ENCODE measurements at regions of chr7 and their contacts with region 1.

Region 1: GRCh38 chr7:44986218-44987053 is 7.6 kb upstream of the MYO1G start:
- DNase-seq: peak; percentile 87
- ATAC-seq: peak; percentile 92
- H3K4me3 ChIP-seq: peak overlapping the region; percentile 88 to 100
- H3K27ac ChIP-seq: peak overlapping the region; percentile 75
- H3K4me1 ChIP-seq: peaks cover 4 to 34% of the 10 kb centered on the region in 2 experiments; a peak in 3 of 4 replicates
- H3K27me3 ChIP-seq: no peaks in the 10 kb centered on the region
- CTCF ChIP-seq: no peak
- POLR2A ChIP-seq: peak; percentile 97
- RAD21 ChIP-seq: no peak

Region 2: GRCh38 chr7:44650772-44651171 is 335.7 kb before region 1 on chr7:
- CTCF ChIA-PET with region 1: no interaction called
- POLR2A ChIA-PET with region 1: no interaction called
- RAD21 ChIA-PET with region 1: no interaction called
- intact Hi-C with region 1: no loop called
- DNase-seq: no peak
- ATAC-seq: no peak
- H3K4me3 ChIP-seq: no peak overlapping the region
- H3K27ac ChIP-seq: no peak overlapping the region
- H3K4me1 ChIP-seq: peaks cover 0 to 4% of the 10 kb centered on the region in 2 experiments; a peak in 1 of 4 replicates
- H3K27me3 ChIP-seq: no peaks in the 10 kb centered on the region
- CTCF ChIP-seq: no peak
- POLR2A ChIP-seq: no peak
- RAD21 ChIP-seq: no peak

Region 3: DNA sequence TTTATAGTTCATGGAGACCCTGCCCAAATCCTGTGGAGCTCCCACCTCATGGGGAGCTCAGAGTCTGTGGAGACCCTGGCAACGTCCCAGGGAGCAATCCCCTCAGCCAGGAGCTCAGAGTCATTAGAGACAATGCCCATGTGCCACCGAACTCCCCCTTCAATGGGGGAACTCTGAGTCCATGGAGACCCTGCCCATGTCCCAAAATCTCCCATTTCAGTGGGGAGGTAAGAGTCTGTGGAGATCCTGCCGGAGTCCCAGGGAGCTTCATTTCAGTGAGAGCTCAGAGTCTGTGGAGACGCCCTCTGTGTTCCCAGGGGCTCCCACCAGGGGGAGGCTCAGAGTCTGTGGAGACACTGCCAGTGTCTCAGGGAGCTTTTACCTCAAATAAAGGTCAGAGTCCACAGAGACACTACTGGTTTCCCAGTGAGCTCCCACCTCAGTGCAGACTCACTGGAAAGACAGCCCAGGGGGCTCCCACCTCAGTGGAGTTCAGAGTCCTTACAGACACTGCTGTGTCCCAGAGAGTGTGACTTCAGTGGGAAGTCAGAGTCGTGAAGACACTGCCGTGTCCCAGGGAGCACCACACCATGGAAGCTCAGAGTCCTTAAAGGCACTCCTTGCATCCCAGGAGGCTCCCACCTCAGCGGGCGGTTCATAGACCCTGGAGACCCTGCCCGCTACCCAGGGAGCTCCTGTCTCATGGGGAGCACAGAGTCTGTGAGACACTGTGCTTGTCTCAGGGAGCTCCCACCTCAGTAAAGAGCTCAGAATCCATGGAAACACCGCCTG is 12.6 kb before region 1 on chr7:
- CTCF ChIA-PET with region 1: no interaction called
- POLR2A ChIA-PET with region 1: interaction called, 10 read pairs
- RAD21 ChIA-PET with region 1: no interaction called
- intact Hi-C with region 1: no loop called
- DNase-seq: no peak
- ATAC-seq: peak; percentile 82
- H3K4me3 ChIP-seq: no peak overlapping the region
- H3K27ac ChIP-seq: no peak overlapping the region
- H3K4me1 ChIP-seq: peaks cover 0 to 3% of the 10 kb centered on the region in 2 experiments; a peak in 1 of 4 replicates
- H3K27me3 ChIP-seq: no peaks in the 10 kb centered on the region
- CTCF ChIP-seq: peak; percentile 56 to 66 (median 58); a peak in 5 of 6 replicates
- POLR2A ChIP-seq: no peak
- RAD21 ChIP-seq: peak; percentile 62

Region 4: GRCh38 chr7:44999245-45000095 is 13.0 kb after region 1 on chr7:
- CTCF ChIA-PET with region 1: no interaction called
- POLR2A ChIA-PET with region 1: interaction called, 8 read pairs
- RAD21 ChIA-PET with region 1: no interaction called
- intact Hi-C with region 1: loop called (anchors 1 kb)
- DNase-seq: peak; percentile 96
- ATAC-seq: peak; percentile 92
- H3K4me3 ChIP-seq: peak overlapping the region; percentile 53 to 73
- H3K27ac ChIP-seq: peak overlapping the region; percentile 55
- H3K4me1 ChIP-seq: peaks cover 0 to 19% of the 10 kb centered on the region in 2 experiments; a peak in 2 of 4 replicates
- H3K27me3 ChIP-seq: no peaks in the 10 kb centered on the region
- CTCF ChIP-seq: no peak
- POLR2A ChIP-seq: peak; percentile 41
- RAD21 ChIP-seq: no peak

Region 5: DNA sequence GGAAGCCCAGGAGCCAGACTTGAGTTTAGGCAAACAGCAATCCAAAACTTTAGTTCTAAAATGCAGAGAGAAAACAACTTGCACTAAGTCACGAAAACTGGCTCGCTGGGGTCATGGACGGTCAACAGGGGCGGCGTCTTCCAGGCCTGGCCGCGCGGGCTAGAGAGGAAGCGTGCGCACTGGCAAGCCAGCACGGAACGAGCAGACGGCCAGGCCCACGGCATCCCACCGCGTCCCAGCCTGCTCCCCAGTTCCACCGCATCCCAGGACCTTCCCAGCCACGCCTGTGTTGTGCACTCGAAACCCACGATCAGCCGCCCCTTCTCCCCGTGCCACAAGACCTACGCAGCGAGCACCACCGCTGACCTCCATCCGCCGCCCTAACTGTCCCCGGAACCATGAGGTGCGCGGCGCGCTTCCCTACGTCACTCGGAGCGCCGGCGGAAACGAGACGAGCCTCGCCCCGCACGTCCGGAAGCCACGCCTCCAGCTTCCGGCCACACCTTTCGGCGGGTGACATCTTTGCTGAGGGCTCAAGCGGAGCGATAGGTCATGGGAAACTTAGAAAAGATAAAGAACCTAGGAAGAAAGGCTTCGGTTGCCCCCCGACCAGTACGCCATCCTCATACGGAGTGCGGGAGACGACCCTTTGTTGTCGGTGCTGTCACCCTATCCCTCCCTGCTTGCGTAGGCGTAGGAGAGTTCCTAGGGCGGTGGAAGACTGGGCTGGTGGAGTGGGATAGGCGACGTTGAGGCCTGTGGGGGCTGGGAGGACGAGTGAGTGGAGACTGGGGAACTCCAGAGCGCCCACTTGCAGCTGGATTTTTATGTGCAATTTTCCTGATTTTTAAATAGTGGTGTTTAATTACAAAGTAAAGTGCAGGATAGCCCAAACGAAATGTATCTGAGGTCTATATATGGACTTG is 125.1 kb after region 1 on chr7 and contains the start of gene TBRG4:
- CTCF ChIA-PET with region 1: no interaction called
- POLR2A ChIA-PET with region 1: interaction called, 7 read pairs
- RAD21 ChIA-PET with region 1: interaction called in 1 of 2 experiments, 3 read pairs
- intact Hi-C with region 1: loop called (anchors 5 kb)
- DNase-seq: peak; percentile 89
- ATAC-seq: peak; percentile 90
- H3K4me3 ChIP-seq: peak within 1 kb of the TSS; percentile 89 to 100
- H3K27ac ChIP-seq: peak within 1 kb of the TSS; percentile 87
- H3K4me1 ChIP-seq: peaks cover 11 to 13% of the 10 kb centered on the region in 2 experiments
- H3K27me3 ChIP-seq: no peaks in the 10 kb centered on the region
- CTCF ChIP-seq: peak; percentile 15 to 40 (median 40); a peak in 5 of 6 replicates
- POLR2A ChIP-seq: peak; percentile 86
- RAD21 ChIP-seq: peak; percentile 53
- total RNA-seq, gene TBRG4: 136 TPM

Region 6: DNA sequence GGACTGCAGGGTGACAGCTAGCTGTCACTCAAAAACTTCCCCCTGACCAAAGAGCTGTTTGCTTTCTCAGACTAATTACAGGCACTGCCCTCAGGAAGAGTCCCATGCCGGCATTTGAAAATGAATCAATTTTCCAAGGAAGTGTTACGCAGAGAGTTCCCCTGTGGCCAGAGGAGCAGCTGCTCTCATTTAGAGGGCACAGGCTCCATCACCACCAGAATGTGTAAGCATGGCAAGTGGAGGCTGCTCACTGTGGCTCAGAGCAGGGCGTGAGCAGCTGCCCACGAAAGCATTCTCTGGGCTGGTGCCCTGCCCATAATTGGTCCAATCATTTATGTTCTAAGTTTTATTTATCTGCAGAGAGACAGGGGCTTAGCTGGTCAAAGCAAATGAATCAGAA is 373.3 kb after region 1 on chr7:
- CTCF ChIA-PET with region 1: no interaction called
- POLR2A ChIA-PET with region 1: no interaction called
- RAD21 ChIA-PET with region 1: no interaction called
- intact Hi-C with region 1: no loop called
- DNase-seq: no peak
- ATAC-seq: no peak
- H3K4me3 ChIP-seq: no peak overlapping the region
- H3K27ac ChIP-seq: no peak overlapping the region
- H3K4me1 ChIP-seq: no peaks in the 10 kb centered on the region
- H3K27me3 ChIP-seq: peaks cover 70% of the 10 kb centered on the region
- CTCF ChIP-seq: no peak
- POLR2A ChIP-seq: no peak
- RAD21 ChIP-seq: no peak

Measured in HCT116 (cell line).